ENCODE measurements at regions of chr18 and their contacts with region 1.

Region 1: DNA sequence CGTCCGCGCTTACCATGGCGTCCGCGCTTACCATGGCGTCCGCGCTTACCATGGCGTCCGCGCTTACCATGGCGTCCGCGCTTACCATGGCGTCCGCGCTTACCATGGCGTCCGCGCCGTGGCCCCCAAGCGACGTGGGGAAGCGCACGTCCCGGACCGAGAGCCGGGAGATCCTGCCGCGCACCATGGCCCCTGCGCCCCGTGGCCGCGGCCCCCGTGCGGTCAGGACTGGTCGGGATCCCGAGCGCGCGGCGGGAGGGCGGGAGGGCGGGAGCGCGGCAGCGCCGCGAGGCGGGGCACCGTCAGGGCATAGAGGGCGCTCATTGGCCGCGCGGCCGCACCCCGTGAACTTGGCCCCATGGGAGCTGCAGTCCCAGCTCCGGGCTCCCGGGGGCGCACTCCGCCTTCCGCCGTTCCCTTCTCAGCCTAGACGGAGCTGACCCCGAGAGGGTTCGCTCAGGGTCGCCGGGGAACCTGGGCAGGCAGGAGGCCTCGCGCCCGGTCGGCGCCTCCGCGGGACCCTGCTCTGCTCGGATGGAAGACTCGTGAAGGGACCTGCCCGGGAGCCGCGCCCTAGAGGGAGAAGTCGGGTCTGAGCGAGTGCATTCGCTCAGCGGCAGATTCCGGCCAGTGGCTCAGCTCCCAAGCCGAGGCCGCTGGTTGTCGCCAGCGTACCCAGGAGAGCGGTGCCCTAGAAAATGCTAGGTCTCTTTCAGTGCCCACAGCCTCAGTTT is at the start of gene ENOSF1:
- DNase-seq: peak; percentile 95
- ATAC-seq: peak; percentile 95
- H3K4me3 Mint-ChIP-seq: peak within 1 kb of the TSS; percentile 63
- H3K27ac Mint-ChIP-seq: no peak within 1 kb of the TSS
- H3K4me1 Mint-ChIP-seq: peaks cover 8% of the 10 kb centered on the region
- H3K27me3 Mint-ChIP-seq: no peaks in the 10 kb centered on the region; the same call in 1 of the 2 replicates
- CTCF ChIP-seq: peak; percentile 91
- total RNA-seq, gene ENOSF1: 44.1 to 52.9 TPM (median 44.6 TPM) in 3 replicates

Region 2: GRCh38 chr18:658001-658946 is 54.3 kb before region 1 on chr18:
- CTCF ChIA-PET with region 1: interaction called, 17 read pairs
- POLR2A ChIA-PET with region 1: interaction called, 10 read pairs
- DNase-seq: peak; percentile 90
- ATAC-seq: peak; percentile 80
- H3K4me3 Mint-ChIP-seq: peak overlapping the region; percentile 88
- H3K27ac Mint-ChIP-seq: peak overlapping the region; percentile 76
- H3K4me1 Mint-ChIP-seq: peaks cover 40% of the 10 kb centered on the region
- H3K27me3 Mint-ChIP-seq: no peaks in the 10 kb centered on the region
- CTCF ChIP-seq: no peak

Region 3: DNA sequence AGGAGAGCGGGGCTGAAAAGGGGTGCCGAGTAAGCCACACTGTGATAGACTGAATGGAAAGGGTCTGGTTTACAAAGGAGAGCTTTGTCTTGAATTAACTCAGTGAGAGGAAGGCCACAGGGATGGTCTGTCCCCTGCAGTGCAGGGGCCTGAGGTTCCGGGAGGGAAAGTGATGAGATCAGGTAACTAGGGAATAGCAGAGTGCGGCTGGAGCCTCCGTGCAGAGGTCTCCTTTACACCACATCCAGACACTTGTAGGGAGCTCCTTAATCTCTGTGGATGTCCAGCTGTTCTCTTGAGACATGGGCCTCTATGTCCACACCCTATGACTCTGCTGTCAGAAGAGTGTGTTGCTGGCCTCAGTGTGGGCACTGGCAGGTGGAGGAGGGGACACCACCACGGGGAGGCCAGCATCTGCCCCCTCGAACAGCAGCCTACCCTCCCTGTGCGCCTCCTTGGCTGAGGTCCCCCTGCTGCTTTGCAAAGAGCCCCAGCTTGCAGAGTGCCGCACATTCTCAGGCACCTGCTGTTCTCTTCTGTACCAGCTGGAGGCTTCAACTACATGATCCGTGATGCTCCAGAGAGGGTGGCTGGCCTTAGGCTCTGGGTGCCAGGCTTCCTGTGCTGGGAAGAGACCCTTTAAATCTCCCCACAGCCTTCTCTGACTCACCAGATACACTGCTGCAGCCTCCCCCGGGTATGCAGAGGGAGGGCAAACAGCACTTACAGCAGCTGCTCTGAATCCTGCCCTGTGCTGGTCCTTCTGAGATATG is 26.0 kb before region 1 on chr18:
- CTCF ChIA-PET with region 1: interaction called, 25 read pairs
- POLR2A ChIA-PET with region 1: interaction called, 3 read pairs
- DNase-seq: peak; percentile 54
- ATAC-seq: peak; percentile 88
- H3K4me3 Mint-ChIP-seq: peak overlapping the region; percentile 30
- H3K27ac Mint-ChIP-seq: peak overlapping the region; percentile 44
- H3K4me1 Mint-ChIP-seq: peaks cover 35% of the 10 kb centered on the region
- H3K27me3 Mint-ChIP-seq: no peaks in the 10 kb centered on the region
- CTCF ChIP-seq: no peak

Region 4: GRCh38 chr18:741931-742512 is 29.5 kb after region 1 on chr18:
- CTCF ChIA-PET with region 1: interaction called, 12 read pairs
- POLR2A ChIA-PET with region 1: no interaction called
- DNase-seq: no peak
- ATAC-seq: peak; percentile 66
- H3K4me3 Mint-ChIP-seq: no peak overlapping the region
- H3K27ac Mint-ChIP-seq: no peak overlapping the region
- H3K4me1 Mint-ChIP-seq: no peaks in the 10 kb centered on the region
- H3K27me3 Mint-ChIP-seq: no peaks in the 10 kb centered on the region
- CTCF ChIP-seq: peak; percentile 68

Region 5: GRCh38 chr18:784470-785172 is 72.1 kb after region 1 on chr18:
- CTCF ChIA-PET with region 1: interaction called, 13 read pairs
- POLR2A ChIA-PET with region 1: no interaction called
- DNase-seq: no peak
- ATAC-seq: peak; percentile 71
- H3K4me3 Mint-ChIP-seq: no peak overlapping the region
- H3K27ac Mint-ChIP-seq: peak overlapping the region; percentile 4; the same call in 1 of the 2 replicates
- H3K4me1 Mint-ChIP-seq: peaks cover 42% of the 10 kb centered on the region
- H3K27me3 Mint-ChIP-seq: no peaks in the 10 kb centered on the region
- CTCF ChIP-seq: no peak

Region 6: DNA sequence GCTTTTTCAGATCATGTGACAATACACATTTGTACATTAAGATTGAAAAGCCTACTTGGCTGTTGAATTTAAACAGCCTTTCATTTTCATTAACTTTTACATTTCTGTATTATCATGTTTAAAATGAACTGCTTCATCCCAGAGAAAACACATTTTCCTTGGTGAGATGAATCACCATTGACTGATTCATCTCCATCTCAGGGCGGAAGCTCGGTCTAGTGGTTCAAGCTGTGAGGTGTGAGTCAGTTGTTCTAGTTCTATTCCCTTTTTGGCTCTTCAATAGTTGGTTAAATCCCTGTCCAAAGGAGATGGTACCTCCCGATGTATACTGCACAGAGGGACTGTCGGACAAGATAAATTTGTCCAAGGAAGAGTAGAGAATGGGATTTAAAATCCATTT is 381.8 kb after region 1 on chr18:
- CTCF ChIA-PET with region 1: no interaction called
- POLR2A ChIA-PET with region 1: no interaction called
- DNase-seq: no peak
- ATAC-seq: no peak
- H3K4me3 Mint-ChIP-seq: no peak overlapping the region
- H3K27ac Mint-ChIP-seq: no peak overlapping the region
- H3K4me1 Mint-ChIP-seq: peaks cover 29% of the 10 kb centered on the region
- H3K27me3 Mint-ChIP-seq: peaks cover 8% of the 10 kb centered on the region
- CTCF ChIP-seq: no peak

Measured in WTC11 (cell line).